Aorta (tissue), 5 donors: ENCODE measurements at regions of chr17 and their contacts with region 1.

Region 1: DNA sequence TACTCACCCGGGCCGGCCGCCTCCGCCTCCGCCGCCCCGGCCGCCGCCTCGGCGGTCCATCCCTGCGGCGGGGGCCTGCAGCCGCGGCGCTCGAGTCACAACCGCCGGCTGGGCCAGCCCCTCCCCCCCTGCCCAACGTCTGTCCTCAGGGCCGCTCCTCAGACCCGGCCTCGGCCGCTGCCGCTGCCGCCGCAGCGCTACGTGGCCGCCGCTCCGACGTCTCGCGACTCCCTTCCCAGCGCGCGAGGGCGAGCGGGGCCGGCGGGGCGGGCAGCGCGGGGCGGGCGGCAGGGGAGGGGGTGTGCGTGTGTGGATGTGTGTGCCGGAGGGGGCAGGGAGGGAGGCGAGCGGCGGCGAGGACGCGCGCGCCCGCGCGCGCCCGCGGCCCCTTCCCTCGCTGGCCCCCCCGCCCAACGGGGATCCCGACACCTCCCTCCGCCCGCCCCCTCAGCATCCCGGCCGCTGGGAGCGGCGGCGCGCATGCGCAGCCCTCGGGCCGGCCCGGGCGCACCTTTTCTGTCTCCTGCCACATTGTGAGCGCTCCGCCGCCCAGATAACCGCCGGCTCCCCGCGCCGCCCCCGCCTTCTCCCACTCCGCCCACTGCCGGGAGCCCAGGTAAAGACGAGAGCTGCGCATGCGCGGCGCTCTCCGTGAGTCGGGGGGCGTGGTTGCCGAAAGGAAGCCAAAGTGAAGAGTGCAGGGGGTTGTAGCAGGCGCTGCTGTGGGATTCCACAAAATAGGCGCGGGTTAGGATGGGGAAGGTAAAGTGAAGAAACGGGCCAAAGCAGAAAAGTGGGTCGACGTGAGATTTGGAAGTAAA is at the start of gene ZNF652:
- DNase-seq: peak; percentile 92 to 95
- ATAC-seq: peak; percentile 95
- H3K4me3 ChIP-seq: peak within 1 kb of the TSS; percentile 89 to 96
- H3K27ac ChIP-seq: peak within 1 kb of the TSS; percentile 5 to 90
- H3K4me1 ChIP-seq: peaks cover 0 to 3% of the 10 kb centered on the region in 2 donors
- H3K27me3 ChIP-seq: no peaks in the 10 kb centered on the region
- total RNA-seq, gene ZNF652: 41.0 to 52.8 TPM

Region 2: DNA sequence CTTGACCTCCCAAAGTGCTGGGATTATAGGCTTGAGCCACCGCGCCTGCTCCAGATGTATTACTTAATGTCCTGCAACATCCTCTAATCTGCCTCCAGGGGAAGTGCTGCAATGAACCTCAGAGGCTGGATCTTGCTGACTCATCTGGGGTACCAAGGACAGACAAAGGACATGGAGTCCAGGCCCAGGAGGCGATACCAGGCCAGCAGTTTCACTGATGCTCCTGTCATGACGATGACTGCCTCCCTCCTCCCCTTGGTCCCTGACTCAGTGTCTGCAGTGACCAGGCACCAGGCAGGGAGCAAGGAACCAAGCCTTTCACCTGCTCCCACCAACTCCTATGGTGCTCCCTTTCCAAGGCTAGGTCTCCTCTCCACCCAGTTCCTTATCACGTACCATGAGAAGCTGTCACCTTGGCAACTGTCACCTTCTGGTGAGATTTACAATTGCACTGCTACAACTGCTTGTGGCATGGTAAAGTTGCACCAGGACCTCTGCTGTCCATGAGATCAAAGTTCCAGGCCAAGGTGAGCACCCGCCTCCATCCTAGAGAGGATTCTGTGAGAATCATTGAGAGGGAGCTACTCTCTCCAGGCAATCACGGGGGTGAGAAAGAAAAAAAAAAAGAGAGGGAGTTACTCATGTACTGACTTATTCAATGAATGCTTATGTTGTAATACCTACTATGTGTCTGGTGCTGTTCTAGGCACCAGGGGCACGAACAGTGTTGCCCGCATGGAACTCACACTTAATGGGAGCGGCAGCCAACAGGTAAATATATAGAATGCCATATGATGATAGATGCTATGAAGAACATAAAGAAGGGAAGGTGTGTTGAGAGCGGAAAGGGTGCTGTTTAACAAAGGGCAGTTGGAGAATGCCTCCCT is 109.7 kb before region 1 on chr17:
- intact Hi-C with region 1: no loop called
- DNase-seq: no peak
- ATAC-seq: peak; percentile 48
- H3K4me3 ChIP-seq: no peak overlapping the region
- H3K27ac ChIP-seq: no peak overlapping the region
- H3K4me1 ChIP-seq: no peaks in the 10 kb centered on the region
- H3K27me3 ChIP-seq: no peaks in the 10 kb centered on the region

Region 3: DNA sequence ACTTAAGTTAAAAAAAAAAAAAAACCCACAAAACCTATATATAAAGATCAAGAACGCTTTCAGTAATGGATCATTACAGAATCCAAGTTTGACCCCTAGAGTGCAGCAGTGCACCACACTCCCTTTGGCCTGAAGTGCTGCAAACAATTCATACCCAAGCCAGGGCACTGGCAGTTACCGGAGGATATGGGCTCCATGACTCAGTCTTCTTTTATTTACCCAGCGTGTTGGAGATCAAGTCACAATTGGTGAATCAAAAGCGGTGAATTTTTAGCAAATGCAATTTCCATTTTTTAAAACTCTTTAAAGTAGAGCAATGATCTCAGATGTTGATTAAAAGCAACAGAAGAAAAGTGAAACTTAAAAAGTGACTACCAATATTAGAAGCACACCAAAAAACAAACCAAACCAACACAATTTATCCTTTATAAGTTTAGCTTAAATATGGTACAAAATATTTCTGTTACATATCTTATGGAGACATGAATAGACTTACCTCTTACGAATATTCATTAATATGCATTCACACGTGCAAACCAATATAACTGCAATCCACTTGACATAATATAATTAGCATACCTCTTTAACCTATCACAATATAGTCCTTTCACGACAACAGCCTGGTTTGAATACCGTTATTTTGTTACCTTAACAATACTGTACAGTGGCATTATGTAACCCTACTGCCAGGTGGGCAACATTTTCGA is 46.4 kb before region 1 on chr17:
- intact Hi-C with region 1: loop called in 1 of 2 experiments (anchors 5 kb)
- DNase-seq: peak; percentile 78 to 80
- ATAC-seq: peak; percentile 95
- H3K4me3 ChIP-seq: no peak overlapping the region
- H3K27ac ChIP-seq: peak overlapping the region in 1 of 2 donors; percentile 40
- H3K4me1 ChIP-seq: peaks cover 0 to 4% of the 10 kb centered on the region in 2 donors
- H3K27me3 ChIP-seq: no peaks in the 10 kb centered on the region

Region 4: GRCh38 chr17:49624896-49625295 is 262.8 kb after region 1 on chr17:
- intact Hi-C with region 1: no loop called
- DNase-seq: peak in 1 of 2 donors; percentile 65
- ATAC-seq: no peak
- H3K4me3 ChIP-seq: no peak overlapping the region
- H3K27ac ChIP-seq: peak overlapping the region in 1 of 2 donors; percentile 38
- H3K4me1 ChIP-seq: peaks cover 3 to 14% of the 10 kb centered on the region in 2 donors
- H3K27me3 ChIP-seq: no peaks in the 10 kb centered on the region